ENCODE measurements at regions of chr14 and their contacts with region 1.

Region 1: GRCh38 chr14:74249433-74250375 is 10.5 kb downstream of the VSX2 start:
- DNase-seq: no peak
- ATAC-seq: no peak
- H3K4me3 ChIP-seq: no peak overlapping the region
- H3K4me3 Mint-ChIP-seq: no peak overlapping the region
- H3K27ac ChIP-seq: no peak overlapping the region
- H3K27ac Mint-ChIP-seq: no peak overlapping the region
- H3K4me1 ChIP-seq: no peaks in the 10 kb centered on the region
- H3K4me1 Mint-ChIP-seq: peaks cover 6% of the 10 kb centered on the region
- H3K27me3 ChIP-seq: peaks cover 5 to 10% of the 10 kb centered on the region in 2 experiments
- H3K27me3 Mint-ChIP-seq: peaks cover 50% of the 10 kb centered on the region
- CTCF ChIP-seq: no peak

Region 2: DNA sequence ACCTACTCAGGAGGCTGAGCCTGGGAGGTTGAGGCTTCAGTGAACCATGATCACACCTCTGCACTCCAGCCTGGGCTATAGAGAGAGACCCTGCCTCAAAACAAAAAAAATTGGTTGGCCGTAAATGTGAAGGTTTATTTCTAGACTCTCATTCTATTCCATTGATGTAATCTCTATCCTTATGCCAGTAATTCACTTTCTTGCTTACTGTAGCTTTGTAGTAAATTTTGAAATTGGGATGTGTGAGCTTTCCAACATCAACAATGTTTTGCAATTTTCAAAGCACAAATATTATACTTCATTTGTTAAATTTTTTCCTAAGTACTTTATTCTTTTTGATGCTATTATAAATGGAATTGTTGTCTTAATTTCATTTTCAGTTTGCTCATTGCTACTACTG is 140.3 kb before region 1 on chr14:
- CTCF ChIA-PET with region 1: interaction called, 16 read pairs
- POLR2A ChIA-PET with region 1: interaction called, 3 read pairs
- intact Hi-C with region 1: loop called in 1 of 2 experiments (anchors 1 kb)
- DNase-seq: no peak
- ATAC-seq: no peak
- H3K4me3 ChIP-seq: no peak overlapping the region
- H3K4me3 Mint-ChIP-seq: no peak overlapping the region
- H3K27ac ChIP-seq: no peak overlapping the region
- H3K27ac Mint-ChIP-seq: no peak overlapping the region
- H3K4me1 ChIP-seq: no peaks in the 10 kb centered on the region
- H3K4me1 Mint-ChIP-seq: no peaks in the 10 kb centered on the region
- H3K27me3 ChIP-seq: no peaks in the 10 kb centered on the region
- H3K27me3 Mint-ChIP-seq: no peaks in the 10 kb centered on the region
- CTCF ChIP-seq: no peak

Region 3: DNA sequence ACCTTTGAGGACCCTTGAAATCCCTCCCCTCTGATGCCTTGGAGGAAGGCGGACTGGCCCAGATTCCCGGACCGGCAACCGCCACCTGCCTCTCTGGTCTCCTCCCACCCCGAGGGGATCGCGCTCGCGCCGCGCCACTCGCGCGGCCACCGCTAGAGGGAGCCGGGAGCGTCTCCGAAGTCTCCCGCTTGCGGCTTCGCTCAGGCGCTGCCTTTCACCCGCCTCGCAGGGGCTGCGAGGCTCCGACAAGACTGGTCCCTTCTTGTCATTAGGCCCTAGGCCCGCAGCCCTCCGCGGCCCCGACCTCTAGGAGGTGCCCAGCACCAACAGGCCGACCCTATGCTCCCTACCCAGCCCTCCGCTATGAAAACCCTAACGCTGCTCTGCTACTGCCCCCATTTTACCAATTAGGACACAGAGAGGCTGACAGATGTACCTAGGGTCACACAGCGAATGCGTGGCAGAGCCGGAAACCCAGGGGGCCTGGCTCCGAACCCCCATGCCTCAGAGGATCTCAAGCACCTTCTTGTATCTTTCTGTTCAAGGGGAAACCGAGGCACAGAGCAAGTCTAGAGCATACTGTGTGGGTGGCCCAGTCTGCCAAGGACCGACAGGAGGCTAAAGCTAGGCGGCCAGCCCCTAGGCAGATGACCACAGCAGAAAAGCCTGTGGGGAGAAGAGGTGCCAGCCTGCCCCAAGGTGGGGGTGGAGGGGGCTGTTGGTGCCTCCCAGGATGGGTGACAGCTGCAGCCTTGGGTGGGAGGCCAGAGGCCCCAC is 31.8 kb before region 1 on chr14:
- CTCF ChIA-PET with region 1: interaction called, 7 read pairs
- POLR2A ChIA-PET with region 1: no interaction called
- intact Hi-C with region 1: loop called (anchors 1 kb)
- DNase-seq: peak; percentile 56 to 82 (median 72)
- ATAC-seq: peak; percentile 99
- H3K4me3 ChIP-seq: peak overlapping the region in 1 of 2 experiments; percentile 13
- H3K4me3 Mint-ChIP-seq: peak overlapping the region; percentile 29
- H3K27ac ChIP-seq: no peak overlapping the region
- H3K27ac Mint-ChIP-seq: no peak overlapping the region
- H3K4me1 ChIP-seq: no peaks in the 10 kb centered on the region
- H3K4me1 Mint-ChIP-seq: peaks cover 2% of the 10 kb centered on the region
- H3K27me3 ChIP-seq: peaks cover 2 to 6% of the 10 kb centered on the region in 2 experiments
- H3K27me3 Mint-ChIP-seq: peaks cover 6% of the 10 kb centered on the region
- CTCF ChIP-seq: peak; percentile 76

Measured in CD8-positive, alpha-beta T cell (primary cell).